ENCODE measurements at regions of chr15 and their contacts with region 1.

Region 1: DNA sequence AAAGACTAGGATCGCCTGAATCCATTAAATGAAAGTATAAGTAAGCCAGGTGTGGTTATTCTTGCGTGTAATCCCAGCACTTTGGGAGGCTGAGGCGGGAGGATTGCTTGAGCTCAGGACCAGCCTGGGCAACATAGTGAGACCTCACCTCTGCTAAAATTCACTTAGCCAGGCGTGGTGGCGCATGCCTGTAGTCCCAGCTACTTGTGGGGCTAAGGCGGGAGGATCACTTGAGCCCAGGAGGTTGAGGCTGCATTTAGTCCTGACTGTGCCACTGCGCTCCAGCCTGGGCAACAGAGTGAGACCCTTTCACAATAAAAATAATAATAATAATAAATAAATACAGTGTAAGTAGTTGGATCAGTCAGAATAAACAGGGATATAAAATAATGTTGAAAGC is 25.5 kb upstream of the HYKK start:
- DNase-seq: no peak
- ATAC-seq: peak; percentile 11

Region 2: GRCh38 chr15:78308422-78309032 is 173.4 kb before region 1 on chr15:
- intact Hi-C with region 1: loop called in 1 of 2 experiments (anchors 5 kb)
- DNase-seq: peak in 1 of 2 donors; percentile 83
- ATAC-seq: peak; percentile 92

Measured in left colon (tissue), 2 donors.